CD4-positive, alpha-beta T cell (primary cell): ENCODE measurements at regions of chr2 and their contacts with region 1.

Region 1: DNA sequence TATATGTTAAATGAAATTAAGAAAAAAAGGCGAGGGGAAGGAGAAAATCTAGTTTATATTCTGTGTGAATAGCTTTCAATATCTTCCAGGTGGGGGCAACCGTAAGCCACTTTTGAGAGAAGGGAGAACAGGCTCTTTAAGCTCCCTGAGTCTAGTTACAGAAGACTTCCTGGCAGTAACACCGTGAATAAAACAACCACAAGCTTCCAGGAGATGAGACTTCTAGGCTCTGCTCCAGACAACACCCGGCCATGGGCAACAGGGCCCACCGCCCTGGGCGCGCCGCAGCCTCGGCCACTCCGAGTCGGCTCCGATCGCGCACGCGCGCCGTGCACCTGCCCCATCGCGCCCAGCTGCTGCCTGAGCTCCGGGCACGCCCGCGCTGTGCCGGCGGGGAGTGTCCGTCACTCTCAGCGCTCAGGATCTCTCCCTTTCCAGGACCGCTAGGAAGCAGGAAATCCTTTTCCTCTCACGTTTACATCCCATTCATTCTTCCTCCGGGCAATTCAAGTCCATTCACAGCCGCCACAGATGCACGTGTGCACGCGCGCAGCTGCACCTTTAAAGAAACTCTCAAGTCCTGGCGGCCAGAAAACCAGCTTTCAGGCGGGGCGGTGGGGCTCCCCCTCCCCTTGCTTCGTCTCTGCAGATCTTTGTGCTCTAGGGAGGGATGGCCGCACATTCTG is 19.4 kb upstream of the PAX3 start:
- DNase-seq: peak in 3 of 14 experiments; percentile 50 to 67 (median 56)
- ATAC-seq: peak; percentile 58
- H3K4me3 ChIP-seq: peak overlapping the region; percentile 49
- H3K4me3 Mint-ChIP-seq: peak overlapping the region; percentile 85
- H3K27ac ChIP-seq: no peak overlapping the region
- H3K27ac Mint-ChIP-seq: no peak overlapping the region
- H3K4me1 ChIP-seq: peaks cover 12% of the 10 kb centered on the region
- H3K4me1 Mint-ChIP-seq: peaks cover 14% of the 10 kb centered on the region
- H3K27me3 ChIP-seq: peaks cover 38 to 66% of the 10 kb centered on the region in 2 experiments
- H3K27me3 Mint-ChIP-seq: peaks cover 79% of the 10 kb centered on the region
- CTCF ChIP-seq: no peak

Region 2: GRCh38 chr2:222336439-222336838 is 18.3 kb after region 1 on chr2:
- CTCF ChIA-PET with region 1: no interaction called
- POLR2A ChIA-PET with region 1: no interaction called
- intact Hi-C with region 1: no loop called
- DNase-seq: no peak
- ATAC-seq: no peak
- H3K4me3 ChIP-seq: no peak overlapping the region
- H3K4me3 Mint-ChIP-seq: no peak overlapping the region
- H3K27ac ChIP-seq: no peak overlapping the region
- H3K27ac Mint-ChIP-seq: no peak overlapping the region
- H3K4me1 ChIP-seq: no peaks in the 10 kb centered on the region
- H3K4me1 Mint-ChIP-seq: no peaks in the 10 kb centered on the region
- H3K27me3 ChIP-seq: no peaks in the 10 kb centered on the region
- H3K27me3 Mint-ChIP-seq: peaks cover 16% of the 10 kb centered on the region
- CTCF ChIP-seq: no peak

Region 3: GRCh38 chr2:222424729-222425671 is 106.8 kb after region 1 on chr2:
- CTCF ChIA-PET with region 1: no interaction called
- POLR2A ChIA-PET with region 1: no interaction called
- intact Hi-C with region 1: loop called in 1 of 2 experiments (anchors 10 kb)
- DNase-seq: peak in 10 of 14 experiments; percentile 3 to 79 (median 14)
- ATAC-seq: peak; percentile 51
- H3K4me3 ChIP-seq: peak overlapping the region; percentile 61
- H3K4me3 Mint-ChIP-seq: peak overlapping the region; percentile 93
- H3K27ac ChIP-seq: peak overlapping the region in 1 of 2 donors; percentile 40
- H3K27ac Mint-ChIP-seq: peak overlapping the region; percentile 70
- H3K4me1 ChIP-seq: peaks cover 37% of the 10 kb centered on the region
- H3K4me1 Mint-ChIP-seq: peaks cover 49% of the 10 kb centered on the region
- H3K27me3 ChIP-seq: peaks cover 0 to 29% of the 10 kb centered on the region in 2 experiments
- H3K27me3 Mint-ChIP-seq: peaks cover 63% of the 10 kb centered on the region
- CTCF ChIP-seq: no peak

Region 4: GRCh38 chr2:222483513-222484039 is 165.4 kb after region 1 on chr2:
- CTCF ChIA-PET with region 1: no interaction called
- POLR2A ChIA-PET with region 1: no interaction called
- intact Hi-C with region 1: loop called in 1 of 2 experiments (anchors 5 kb)
- DNase-seq: peak in 2 of 14 experiments; percentile 14
- ATAC-seq: no peak
- H3K4me3 ChIP-seq: no peak overlapping the region
- H3K4me3 Mint-ChIP-seq: no peak overlapping the region
- H3K27ac ChIP-seq: no peak overlapping the region
- H3K27ac Mint-ChIP-seq: no peak overlapping the region
- H3K4me1 ChIP-seq: no peaks in the 10 kb centered on the region
- H3K4me1 Mint-ChIP-seq: no peaks in the 10 kb centered on the region
- H3K27me3 ChIP-seq: no peaks in the 10 kb centered on the region
- H3K27me3 Mint-ChIP-seq: no peaks in the 10 kb centered on the region
- CTCF ChIP-seq: no peak

Region 5: DNA sequence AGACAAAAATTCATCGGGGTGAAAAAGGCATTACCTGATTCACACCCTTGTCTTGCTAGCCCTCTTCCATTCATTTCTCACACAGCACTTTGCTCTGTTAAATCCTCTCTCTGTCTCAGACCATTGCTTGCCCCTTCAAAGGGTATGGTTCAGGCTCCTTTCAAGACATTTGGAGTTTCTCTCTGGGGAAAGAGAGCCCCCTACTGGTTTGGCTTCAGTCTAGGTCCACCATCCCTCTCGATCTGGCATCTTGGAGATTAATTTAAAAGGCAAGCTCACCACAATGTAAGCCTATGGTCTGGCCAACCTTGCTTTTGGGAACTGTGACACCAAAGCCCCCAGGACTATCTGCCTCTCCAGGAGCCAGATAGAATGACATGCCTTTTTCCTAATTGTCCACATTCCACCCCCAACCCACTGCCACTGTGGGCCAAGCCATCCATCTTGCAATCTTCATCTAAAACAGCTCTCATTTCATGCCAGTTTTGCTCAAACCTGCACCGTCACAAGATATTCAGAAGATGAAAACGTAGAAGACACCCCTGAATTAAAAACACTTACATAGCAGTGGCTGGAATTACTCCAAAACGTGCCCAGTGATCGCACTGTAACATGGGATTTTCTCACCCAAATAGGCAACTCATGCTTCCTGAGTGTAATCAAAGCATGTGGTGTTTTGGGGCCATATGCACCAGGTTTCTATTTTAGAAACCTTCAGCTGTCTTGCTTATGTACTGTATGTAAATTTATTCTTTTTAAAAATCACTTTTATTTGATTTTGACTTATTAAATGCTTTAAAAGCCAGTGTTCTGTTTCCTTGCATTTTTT is 243.9 kb after region 1 on chr2:
- CTCF ChIA-PET with region 1: interaction called, 8 read pairs
- POLR2A ChIA-PET with region 1: no interaction called
- intact Hi-C with region 1: loop called (anchors 2 kb)
- DNase-seq: peak in 6 of 14 experiments; percentile 4 to 64 (median 43)
- ATAC-seq: no peak
- H3K4me3 ChIP-seq: no peak overlapping the region
- H3K4me3 Mint-ChIP-seq: no peak overlapping the region
- H3K27ac ChIP-seq: no peak overlapping the region
- H3K27ac Mint-ChIP-seq: no peak overlapping the region
- H3K4me1 ChIP-seq: no peaks in the 10 kb centered on the region
- H3K4me1 Mint-ChIP-seq: no peaks in the 10 kb centered on the region
- H3K27me3 ChIP-seq: no peaks in the 10 kb centered on the region
- H3K27me3 Mint-ChIP-seq: no peaks in the 10 kb centered on the region
- CTCF ChIP-seq: peak; percentile 24

Region 6: DNA sequence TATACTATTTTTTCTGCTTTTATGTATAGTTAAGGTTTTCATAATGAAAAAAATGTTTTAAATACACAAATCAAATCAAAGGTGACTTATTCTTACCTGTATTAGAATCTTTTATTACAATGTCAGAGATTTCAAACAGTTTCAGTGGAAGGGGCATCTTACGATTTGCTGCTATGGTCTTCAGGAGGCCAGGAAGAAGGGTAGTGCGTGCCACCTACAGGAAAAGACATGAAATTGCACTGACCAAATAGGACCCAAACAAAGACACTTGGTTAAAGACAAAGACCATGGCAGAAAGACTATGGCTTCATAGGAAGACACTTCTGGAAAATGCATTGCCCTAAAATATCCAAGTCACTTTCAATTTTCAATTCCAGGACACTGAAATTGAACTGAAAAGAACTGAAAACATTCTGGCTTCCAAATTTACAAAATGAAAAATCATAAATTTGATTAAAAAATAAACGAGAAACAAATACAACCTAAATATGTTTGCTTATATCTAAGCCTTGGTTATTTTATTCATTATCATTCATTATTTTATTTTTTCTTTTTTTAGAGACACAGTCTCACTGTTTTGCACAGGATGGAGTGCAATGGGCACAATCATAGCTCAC is 295.7 kb after region 1 on chr2:
- CTCF ChIA-PET with region 1: no interaction called
- POLR2A ChIA-PET with region 1: no interaction called
- intact Hi-C with region 1: loop called (anchors 2 to 5 kb)
- DNase-seq: peak in 4 of 14 experiments; percentile 10 to 45 (median 32)
- ATAC-seq: no peak
- H3K4me3 ChIP-seq: no peak overlapping the region
- H3K4me3 Mint-ChIP-seq: no peak overlapping the region
- H3K27ac ChIP-seq: no peak overlapping the region
- H3K27ac Mint-ChIP-seq: no peak overlapping the region
- H3K4me1 ChIP-seq: no peaks in the 10 kb centered on the region
- H3K4me1 Mint-ChIP-seq: peaks cover 3% of the 10 kb centered on the region
- H3K27me3 ChIP-seq: no peaks in the 10 kb centered on the region
- H3K27me3 Mint-ChIP-seq: no peaks in the 10 kb centered on the region
- CTCF ChIP-seq: peak; percentile 40